Right lobe of liver (tissue), 6 donors: ENCODE measurements at regions of chr14 and their contacts with region 1.

Region 1: DNA sequence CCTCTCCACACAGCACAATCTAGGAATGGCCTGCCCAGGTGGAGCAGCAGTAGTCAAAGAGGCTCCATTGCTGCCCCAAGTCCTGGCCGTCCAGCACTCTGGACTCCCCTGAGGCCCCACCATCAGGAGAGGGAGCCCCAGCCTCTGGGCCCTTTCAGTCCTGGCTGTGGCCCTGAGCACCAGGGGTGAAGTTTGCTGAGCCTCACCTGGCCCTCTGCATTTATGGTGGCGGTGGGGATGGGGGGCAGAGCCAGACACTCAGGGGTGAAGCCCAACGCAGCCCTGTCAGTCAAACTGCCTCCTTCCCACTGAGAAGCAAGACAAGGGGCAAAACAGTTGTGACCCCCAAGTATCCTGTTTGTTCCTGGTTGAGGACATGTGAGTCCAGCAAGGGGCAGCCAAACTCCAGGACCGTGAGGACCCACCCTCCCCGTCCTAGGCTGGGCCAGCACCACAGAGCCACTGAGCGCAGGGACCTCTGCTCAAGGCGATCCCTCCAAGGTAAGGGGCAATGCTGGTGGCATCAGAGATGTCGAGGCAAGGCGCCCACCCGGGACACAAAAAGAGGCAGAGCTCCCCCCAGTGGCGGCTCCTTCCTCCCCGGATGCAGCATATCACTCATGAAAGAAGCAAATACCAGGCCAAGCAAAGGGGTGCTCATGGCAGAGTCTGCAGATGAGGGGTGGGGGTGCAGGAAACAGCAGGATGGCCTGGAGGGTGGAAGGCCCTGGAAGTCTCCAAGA is 4.8 kb upstream of the AMN start:
- DNase-seq: peak in 2 of 3 donors; percentile 57 to 64
- ATAC-seq: peak; percentile 31 to 53 (median 40)
- H3K4me3 ChIP-seq: no peak overlapping the region
- H3K27ac ChIP-seq: no peak overlapping the region
- H3K4me1 ChIP-seq: peaks cover 0 to 5% (median under 1%) of the 10 kb centered on the region in 4 donors
- H3K27me3 ChIP-seq: no peaks in the 10 kb centered on the region
- CTCF ChIP-seq: peak; percentile 58 to 67 (median 63)
- POLR2A ChIP-seq: no peak

Region 2: DNA sequence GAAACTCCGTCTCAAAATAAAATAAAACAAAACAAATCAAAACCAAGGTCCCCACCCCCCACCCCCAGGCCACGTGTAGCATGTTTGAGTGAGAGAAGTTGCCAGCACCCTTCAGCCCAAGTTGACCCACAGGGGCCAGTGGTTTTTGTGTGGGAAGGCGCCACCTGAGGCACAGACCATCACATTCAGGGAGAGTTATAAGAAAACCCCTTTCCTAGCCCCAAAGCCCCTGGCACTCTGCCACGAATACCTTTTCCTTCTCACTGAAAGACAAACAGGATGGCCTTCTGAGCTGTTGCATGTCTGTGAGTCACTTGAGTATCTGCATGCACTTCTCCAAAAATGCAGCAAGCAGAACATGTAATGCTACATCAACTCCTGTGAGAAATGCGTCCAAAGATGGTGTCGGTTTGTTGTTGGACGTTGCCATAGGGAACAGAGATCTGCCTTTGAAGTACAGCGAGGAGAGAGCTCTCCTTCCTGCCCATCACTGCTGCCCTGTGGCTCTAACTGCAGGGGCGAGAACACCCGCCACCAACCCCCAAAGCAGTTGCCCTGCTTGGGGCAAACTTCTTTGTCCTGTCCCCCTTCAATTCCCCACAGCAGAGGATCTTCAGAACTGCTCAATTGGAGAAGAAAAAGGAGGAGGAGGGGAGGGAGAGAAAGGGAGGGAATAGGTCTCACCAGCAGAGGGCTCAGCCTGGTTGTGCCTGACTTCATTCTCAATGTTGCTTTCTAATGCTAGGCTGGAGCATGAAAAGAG is 143.1 kb before region 1 on chr14:
- intact Hi-C with region 1: loop called (anchors 5 to 10 kb)
- DNase-seq: no peak
- ATAC-seq: peak; percentile 73 to 80 (median 75)
- H3K4me3 ChIP-seq: no peak overlapping the region
- H3K27ac ChIP-seq: no peak overlapping the region
- H3K4me1 ChIP-seq: peaks cover 0 to 4% (median 0%) of the 10 kb centered on the region in 4 donors
- H3K27me3 ChIP-seq: no peaks in the 10 kb centered on the region
- CTCF ChIP-seq: peak; percentile 67 to 78 (median 70)
- POLR2A ChIP-seq: no peak

Region 3: DNA sequence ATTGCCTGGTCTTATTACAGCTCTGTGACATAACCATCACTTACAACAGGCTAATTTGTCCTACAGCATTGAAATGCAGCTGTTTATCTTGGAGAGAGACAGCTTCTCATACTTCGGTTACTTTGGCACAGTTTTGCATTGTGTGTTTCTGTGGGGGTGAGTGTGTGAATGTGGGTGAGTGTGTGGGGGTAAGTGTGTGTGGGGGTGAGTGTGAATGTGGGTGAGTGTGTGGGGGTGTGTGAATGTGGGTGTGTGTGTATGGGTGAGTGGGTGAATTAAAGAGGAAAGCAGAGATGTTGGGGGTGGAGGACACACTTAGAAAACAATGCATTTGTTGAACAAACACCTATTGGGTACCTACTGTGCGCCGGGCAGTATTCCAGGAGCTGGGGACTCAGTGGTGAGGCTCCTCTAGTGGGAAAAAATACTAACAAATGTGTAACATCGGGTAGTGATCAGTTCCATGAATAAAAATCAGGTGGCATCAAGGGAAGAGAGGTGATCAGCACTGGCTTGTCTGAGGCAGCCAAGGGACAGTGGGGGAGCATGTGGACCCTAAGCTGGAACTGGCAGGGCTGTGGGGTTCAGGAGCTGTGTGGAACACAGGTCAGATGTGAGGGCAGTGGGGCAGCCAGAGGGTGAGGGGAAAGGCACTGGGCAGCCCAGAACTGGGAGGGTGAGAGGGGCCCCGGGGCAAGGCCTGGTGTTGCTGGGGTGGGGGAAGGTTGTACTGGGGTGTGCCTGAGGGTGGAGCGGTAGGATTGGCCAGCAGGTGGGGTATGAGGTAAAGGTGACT is 39.3 kb before region 1 on chr14:
- intact Hi-C with region 1: no loop called
- DNase-seq: no peak
- ATAC-seq: peak; percentile 21 to 66 (median 42)
- H3K4me3 ChIP-seq: no peak overlapping the region
- H3K27ac ChIP-seq: no peak overlapping the region
- H3K4me1 ChIP-seq: peaks cover 0 to 16% (median 6%) of the 10 kb centered on the region in 4 donors
- H3K27me3 ChIP-seq: no peaks in the 10 kb centered on the region
- CTCF ChIP-seq: peak in 1 of 4 donors; percentile 4
- POLR2A ChIP-seq: no peak